Adrenal gland (tissue), 19 donors: ENCODE measurements at regions of chr5 and their contacts with region 1.

Region 1: DNA sequence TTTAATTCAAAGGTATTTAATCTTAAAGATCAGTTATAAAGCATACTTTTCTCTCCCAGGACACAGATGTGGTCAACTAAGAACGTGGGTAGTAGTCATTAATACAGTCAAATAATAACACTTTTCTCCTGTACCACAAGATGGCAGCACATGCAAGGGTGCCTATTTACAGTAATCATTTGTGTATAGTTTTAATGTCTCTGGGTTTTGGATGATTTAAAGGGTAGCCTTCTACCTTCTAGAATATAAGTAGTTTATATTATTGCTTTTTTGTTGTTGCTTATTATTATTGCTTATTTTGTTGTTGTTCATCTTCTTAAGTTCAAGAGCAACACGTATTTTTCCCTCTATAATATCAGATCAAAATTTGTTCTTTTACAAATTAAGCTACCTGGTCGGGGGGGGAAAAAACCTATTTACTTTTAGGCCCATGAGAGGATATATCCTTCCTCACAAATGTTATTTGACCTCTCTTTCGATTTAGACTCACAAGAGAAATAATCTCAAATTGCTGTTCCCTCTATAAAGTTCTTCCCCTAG is 59.6 kb upstream of the SLC27A6 start:
- DNase-seq: peak; percentile 34 to 60 (median 49)
- H3K4me3 ChIP-seq: no peak overlapping the region
- H3K27ac ChIP-seq: no peak overlapping the region
- H3K4me1 ChIP-seq: no peaks in the 10 kb centered on the region
- H3K27me3 ChIP-seq: no peaks in the 10 kb centered on the region
- CTCF ChIP-seq: peak; percentile 75 to 90 (median 85)
- POLR2A ChIP-seq: no peak

Region 2: GRCh38 chr5:129053438-129053837 is 147.8 kb after region 1 on chr5:
- intact Hi-C with region 1: loop called in 1 of 2 experiments (anchors 10 kb)
- DNase-seq: no peak
- H3K4me3 ChIP-seq: no peak overlapping the region
- H3K27ac ChIP-seq: no peak overlapping the region
- H3K4me1 ChIP-seq: no peaks in the 10 kb centered on the region
- H3K27me3 ChIP-seq: no peaks in the 10 kb centered on the region
- CTCF ChIP-seq: peak in 4 of 6 experiments; percentile 10 to 30 (median 20)
- POLR2A ChIP-seq: no peak

Region 3: DNA sequence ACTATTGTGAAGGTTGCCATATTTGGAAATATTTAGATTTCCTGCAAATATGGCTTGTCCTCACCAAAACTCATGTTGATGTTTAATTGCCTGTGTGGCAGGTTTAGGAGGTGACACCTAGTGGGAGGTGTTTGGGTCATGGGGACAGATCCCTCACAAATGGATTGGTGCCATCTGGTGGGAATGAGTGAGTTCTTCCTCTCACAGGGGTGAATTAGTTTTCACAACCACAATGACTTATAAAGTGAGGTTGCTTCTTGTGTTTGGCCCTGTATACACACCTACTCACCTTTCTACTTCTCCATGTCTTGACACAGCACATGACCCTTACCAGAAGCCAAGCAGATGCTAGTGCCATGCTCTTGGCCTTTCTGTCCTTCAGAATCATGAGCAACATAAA is 230.0 kb after region 1 on chr5:
- intact Hi-C with region 1: loop called in 1 of 2 experiments (anchors 10 kb)
- DNase-seq: no peak
- H3K4me3 ChIP-seq: no peak overlapping the region
- H3K27ac ChIP-seq: no peak overlapping the region
- H3K4me1 ChIP-seq: no peaks in the 10 kb centered on the region
- H3K27me3 ChIP-seq: no peaks in the 10 kb centered on the region
- CTCF ChIP-seq: no peak
- POLR2A ChIP-seq: no peak

Region 4: DNA sequence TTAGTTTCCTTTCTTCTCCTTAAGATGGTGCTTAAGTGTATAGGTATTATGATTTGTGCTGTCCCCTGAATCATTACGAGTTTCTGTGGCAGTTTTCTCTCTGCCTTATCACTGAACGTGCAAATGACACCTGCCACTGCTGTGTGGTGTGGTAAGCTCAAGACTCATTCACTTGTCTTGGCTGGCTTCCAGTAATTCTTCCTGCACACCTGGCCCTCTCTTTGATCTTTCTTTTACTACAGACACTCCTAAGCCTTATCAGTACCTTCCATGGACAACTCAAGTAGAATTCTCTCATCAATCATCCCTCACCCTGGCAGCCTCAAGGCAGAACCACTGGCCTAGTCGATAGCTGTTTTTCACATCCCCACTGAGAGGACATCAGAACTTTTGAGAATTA is 471.9 kb after region 1 on chr5:
- intact Hi-C with region 1: no loop called
- DNase-seq: no peak
- H3K4me3 ChIP-seq: no peak overlapping the region
- H3K27ac ChIP-seq: no peak overlapping the region
- H3K4me1 ChIP-seq: no peaks in the 10 kb centered on the region
- H3K27me3 ChIP-seq: no peaks in the 10 kb centered on the region
- CTCF ChIP-seq: no peak
- POLR2A ChIP-seq: no peak